Activated B cell treated with CpG ODN at 0.5 μM for 24 hours (primary cell): ENCODE measurements at regions of chr1 and their contacts with region 1.

Region 1: GRCh38 chr1:153352523-153352922 is 3.9 kb upstream of the PGLYRP4 start:
- DNase-seq: no peak
- ATAC-seq: peak; percentile 67
- H3K4me3 Mint-ChIP-seq: no peak overlapping the region
- H3K27ac Mint-ChIP-seq: no peak overlapping the region
- H3K4me1 Mint-ChIP-seq: peaks cover 6% of the 10 kb centered on the region
- H3K27me3 Mint-ChIP-seq: peaks cover 31% of the 10 kb centered on the region
- CTCF ChIP-seq: peak; percentile 91

Region 2: GRCh38 chr1:153404768-153405167 is 52.2 kb after region 1 on chr1:
- CTCF ChIA-PET with region 1: no interaction called
- POLR2A ChIA-PET with region 1: no interaction called
- intact Hi-C with region 1: loop called (anchors 2 kb)
- DNase-seq: no peak
- ATAC-seq: no peak
- H3K4me3 Mint-ChIP-seq: no peak overlapping the region
- H3K27ac Mint-ChIP-seq: no peak overlapping the region
- H3K4me1 Mint-ChIP-seq: no peaks in the 10 kb centered on the region
- H3K27me3 Mint-ChIP-seq: peaks cover 31% of the 10 kb centered on the region
- CTCF ChIP-seq: no peak

Region 3: DNA sequence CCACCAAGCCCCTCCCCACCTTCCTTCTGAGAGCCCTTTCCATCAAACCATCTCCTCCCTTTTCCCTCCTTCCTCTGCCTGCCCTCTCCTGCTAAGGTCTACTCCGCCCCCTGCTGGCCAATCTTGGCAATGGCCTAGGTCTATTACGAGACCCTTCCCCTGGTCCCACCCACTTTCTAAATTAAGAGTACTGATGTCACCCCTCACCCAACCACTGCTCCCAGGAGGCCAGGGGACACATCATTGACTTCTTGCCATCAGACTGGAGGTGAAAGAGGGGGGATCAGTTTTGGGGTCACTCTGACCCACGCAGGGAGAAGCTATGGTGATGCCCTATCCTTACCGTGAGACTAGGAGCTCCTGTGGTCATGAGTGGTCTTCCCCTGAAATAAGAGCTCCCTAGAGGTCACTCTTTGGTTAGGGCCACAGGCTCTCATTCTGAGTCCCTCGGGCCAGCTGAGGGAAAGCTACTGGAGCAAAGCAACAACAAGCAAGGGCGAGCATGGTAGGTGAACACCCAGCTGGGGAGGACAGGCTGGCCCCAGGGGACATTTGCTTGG is 142.5 kb after region 1 on chr1:
- CTCF ChIA-PET with region 1: interaction called, 67 read pairs
- POLR2A ChIA-PET with region 1: no interaction called
- intact Hi-C with region 1: loop called (anchors 1 kb)
- DNase-seq: peak; percentile 69
- ATAC-seq: peak; percentile 89
- H3K4me3 Mint-ChIP-seq: no peak overlapping the region
- H3K27ac Mint-ChIP-seq: peak overlapping the region; percentile 39
- H3K4me1 Mint-ChIP-seq: peaks cover 11% of the 10 kb centered on the region
- H3K27me3 Mint-ChIP-seq: peaks cover 22% of the 10 kb centered on the region
- CTCF ChIP-seq: peak; percentile 74